ENCODE measurements at regions of chr10 and their contacts with region 1.

Region 1: DNA sequence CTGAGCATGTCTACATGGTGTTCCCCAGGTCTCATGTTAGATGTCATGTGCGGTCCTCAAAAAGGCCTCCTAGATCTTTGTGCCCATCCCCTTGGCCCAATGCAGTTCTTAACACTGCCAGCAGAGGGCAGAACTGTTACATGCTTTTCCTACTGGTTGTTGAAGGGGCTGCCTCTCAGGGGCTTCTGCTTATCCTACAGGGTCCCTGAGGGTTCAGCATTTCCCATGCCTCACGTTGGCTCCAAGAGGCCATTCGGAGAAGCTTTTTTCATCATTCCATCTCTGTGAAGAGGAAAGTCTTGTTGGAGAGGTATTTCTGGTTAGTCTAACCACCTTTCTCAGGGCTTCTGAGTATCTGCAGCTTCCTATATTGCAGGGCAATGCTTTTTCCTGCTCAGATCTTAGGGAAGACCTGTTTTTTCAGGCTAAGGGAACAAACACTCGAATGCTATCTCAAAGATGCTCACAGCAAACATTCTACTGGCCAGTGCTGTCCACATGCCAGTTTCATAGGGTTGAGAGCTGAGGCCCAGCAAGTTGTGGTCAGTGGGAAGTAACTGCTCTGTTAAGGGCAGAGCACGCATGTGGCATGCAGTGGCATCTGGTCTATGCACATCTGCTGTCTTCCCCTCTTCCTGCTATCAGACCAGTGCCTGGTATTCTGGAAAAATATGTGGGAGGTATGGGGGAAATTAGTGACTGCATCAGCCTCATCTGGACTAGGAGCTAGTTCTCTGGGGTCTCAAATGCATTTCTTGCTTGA is 31.5 kb downstream of the MBL2 start:
- DNase-seq: peak; percentile 12
- H3K4me3 Mint-ChIP-seq: no peak overlapping the region
- H3K27ac Mint-ChIP-seq: no peak overlapping the region
- H3K4me1 Mint-ChIP-seq: no peaks in the 10 kb centered on the region
- H3K27me3 Mint-ChIP-seq: no peaks in the 10 kb centered on the region

Region 2: DNA sequence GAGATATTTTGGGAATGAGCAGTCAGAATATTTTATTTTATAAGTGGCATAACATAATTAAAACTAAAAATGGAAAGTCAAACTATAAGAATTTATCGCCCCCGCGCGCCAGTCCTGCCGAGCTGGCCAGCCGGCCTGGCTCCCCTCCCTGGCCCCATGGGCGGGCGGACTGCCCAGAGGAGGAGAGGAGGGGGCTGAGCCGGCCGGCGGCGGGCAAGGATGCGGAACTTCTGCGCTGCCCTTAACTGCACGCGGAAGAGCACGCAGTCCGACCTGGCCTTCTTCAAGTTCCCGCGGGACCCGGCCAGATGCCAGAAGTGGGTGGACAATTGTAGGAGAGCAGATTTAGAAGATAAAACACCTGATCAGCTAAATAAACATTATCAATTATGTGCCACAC is 330.2 kb before region 1 on chr10:
- intact Hi-C with region 1: no loop called
- DNase-seq: no peak
- H3K4me3 Mint-ChIP-seq: no peak overlapping the region
- H3K27ac Mint-ChIP-seq: no peak overlapping the region
- H3K4me1 Mint-ChIP-seq: no peaks in the 10 kb centered on the region
- H3K27me3 Mint-ChIP-seq: no peaks in the 10 kb centered on the region

Region 3: DNA sequence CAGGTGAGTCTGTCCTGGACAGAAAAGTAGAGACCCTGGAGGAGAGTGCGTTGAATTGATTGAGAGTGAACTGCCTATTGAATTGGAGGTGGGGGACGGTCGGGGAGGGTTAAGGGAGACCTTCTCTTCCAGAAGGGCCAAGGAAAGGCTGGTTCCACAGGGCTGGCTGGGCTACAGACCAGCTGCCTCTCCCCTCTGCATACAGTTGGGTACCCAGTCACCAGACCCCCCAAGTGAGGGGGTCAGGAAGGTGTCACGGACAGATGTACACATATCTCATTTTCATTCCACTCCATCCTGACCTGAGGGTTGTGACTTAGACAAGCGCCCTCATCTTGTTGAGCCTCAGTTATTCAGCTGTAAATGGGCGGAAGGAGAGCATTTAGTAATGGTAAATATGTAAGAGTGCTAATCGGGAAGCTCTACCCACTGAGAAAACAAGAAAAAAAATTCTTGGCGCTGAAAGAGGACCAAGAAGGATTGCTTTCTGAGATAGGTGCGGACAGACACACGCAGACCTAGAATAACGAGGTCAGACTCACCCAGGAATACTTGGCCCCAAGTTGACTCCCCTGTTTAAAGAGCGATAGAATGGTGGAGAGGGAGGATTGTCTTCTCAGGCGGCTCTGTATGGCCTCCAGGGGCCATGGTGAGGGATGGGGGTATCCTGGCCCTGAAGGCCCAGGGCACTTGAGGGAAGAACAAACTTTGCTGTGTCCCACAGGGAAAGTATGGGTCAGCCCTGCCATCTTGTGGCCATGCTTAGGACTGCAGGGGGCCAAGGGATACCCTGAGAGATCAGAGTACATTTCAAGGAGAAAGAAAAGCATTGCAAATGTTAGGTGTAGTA is 38.7 kb after region 1 on chr10:
- intact Hi-C with region 1: loop called (anchors 1 kb)
- DNase-seq: peak; percentile 31
- H3K4me3 Mint-ChIP-seq: no peak overlapping the region
- H3K27ac Mint-ChIP-seq: no peak overlapping the region
- H3K4me1 Mint-ChIP-seq: no peaks in the 10 kb centered on the region
- H3K27me3 Mint-ChIP-seq: no peaks in the 10 kb centered on the region